CD8-positive, alpha-beta T cell (primary cell): ENCODE measurements at regions of chr2 and their contacts with region 1.

Region 1: GRCh38 chr2:120174963-120175581 is 48.1 kb downstream of the TMEM185B start:
- DNase-seq: peak in 3 of 9 experiments; percentile 26 to 78 (median 70)
- ATAC-seq: no peak
- H3K4me3 ChIP-seq: no peak overlapping the region
- H3K4me3 Mint-ChIP-seq: no peak overlapping the region
- H3K27ac ChIP-seq: peak overlapping the region in 1 of 2 experiments; percentile 1
- H3K27ac Mint-ChIP-seq: peak overlapping the region; percentile 80
- H3K4me1 ChIP-seq: peaks cover 46% of the 10 kb centered on the region
- H3K4me1 Mint-ChIP-seq: peaks cover 49% of the 10 kb centered on the region
- H3K27me3 ChIP-seq: no peaks in the 10 kb centered on the region
- H3K27me3 Mint-ChIP-seq: no peaks in the 10 kb centered on the region
- CTCF ChIP-seq: peak; percentile 94

Region 2: DNA sequence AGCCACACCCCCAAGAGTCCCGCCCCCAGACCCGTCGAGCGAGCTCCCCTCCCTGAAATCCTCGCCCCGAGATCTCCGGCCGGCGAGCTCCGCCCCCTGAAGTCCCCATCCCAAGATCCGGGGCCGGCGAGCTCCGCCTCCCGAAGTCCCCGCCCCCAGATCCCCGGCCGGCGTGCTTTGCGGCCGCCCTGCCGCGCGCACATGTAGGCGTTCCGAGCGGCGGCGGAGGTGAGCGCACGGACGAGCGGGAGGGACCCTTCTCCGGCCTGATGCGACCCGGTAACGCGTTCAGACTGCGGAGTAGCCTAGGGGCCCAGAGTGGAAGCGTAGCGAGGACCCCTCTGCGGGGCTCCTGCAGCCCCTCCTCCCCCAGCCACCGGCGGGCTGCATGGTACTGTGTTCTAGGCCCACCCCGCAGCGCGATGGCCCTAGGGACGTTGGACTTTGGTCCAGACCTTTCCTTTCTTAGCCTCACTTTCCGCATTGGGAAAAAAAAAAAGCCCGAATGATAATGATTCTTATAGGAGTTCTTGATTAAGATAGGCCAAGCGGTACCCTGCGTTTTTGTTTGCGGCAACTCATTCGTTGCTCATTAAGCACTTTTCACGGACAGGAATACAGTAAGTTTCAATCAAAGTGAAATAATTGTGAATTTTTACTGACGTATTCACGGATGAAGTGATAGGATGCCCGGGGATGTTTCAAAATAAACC is 495.9 kb before region 1 on chr2 and contains the start of gene TMEM177:
- CTCF ChIA-PET with region 1: interaction called, 7 read pairs
- POLR2A ChIA-PET with region 1: interaction called, 8 read pairs
- intact Hi-C with region 1: loop called in 1 of 2 experiments (anchors 2 kb)
- DNase-seq: peak; percentile 77 to 93 (median 87)
- ATAC-seq: peak; percentile 86
- H3K4me3 ChIP-seq: peak within 1 kb of the TSS; percentile 71 to 90
- H3K4me3 Mint-ChIP-seq: peak within 1 kb of the TSS; percentile 89
- H3K27ac ChIP-seq: peak within 1 kb of the TSS; percentile 59 to 69
- H3K27ac Mint-ChIP-seq: peak within 1 kb of the TSS; percentile 92
- H3K4me1 ChIP-seq: peaks cover 18% of the 10 kb centered on the region
- H3K4me1 Mint-ChIP-seq: peaks cover 27% of the 10 kb centered on the region
- H3K27me3 ChIP-seq: no peaks in the 10 kb centered on the region
- H3K27me3 Mint-ChIP-seq: no peaks in the 10 kb centered on the region
- CTCF ChIP-seq: no peak
- total RNA-seq, gene TMEM177: 2.1 to 3.8 TPM

Region 3: DNA sequence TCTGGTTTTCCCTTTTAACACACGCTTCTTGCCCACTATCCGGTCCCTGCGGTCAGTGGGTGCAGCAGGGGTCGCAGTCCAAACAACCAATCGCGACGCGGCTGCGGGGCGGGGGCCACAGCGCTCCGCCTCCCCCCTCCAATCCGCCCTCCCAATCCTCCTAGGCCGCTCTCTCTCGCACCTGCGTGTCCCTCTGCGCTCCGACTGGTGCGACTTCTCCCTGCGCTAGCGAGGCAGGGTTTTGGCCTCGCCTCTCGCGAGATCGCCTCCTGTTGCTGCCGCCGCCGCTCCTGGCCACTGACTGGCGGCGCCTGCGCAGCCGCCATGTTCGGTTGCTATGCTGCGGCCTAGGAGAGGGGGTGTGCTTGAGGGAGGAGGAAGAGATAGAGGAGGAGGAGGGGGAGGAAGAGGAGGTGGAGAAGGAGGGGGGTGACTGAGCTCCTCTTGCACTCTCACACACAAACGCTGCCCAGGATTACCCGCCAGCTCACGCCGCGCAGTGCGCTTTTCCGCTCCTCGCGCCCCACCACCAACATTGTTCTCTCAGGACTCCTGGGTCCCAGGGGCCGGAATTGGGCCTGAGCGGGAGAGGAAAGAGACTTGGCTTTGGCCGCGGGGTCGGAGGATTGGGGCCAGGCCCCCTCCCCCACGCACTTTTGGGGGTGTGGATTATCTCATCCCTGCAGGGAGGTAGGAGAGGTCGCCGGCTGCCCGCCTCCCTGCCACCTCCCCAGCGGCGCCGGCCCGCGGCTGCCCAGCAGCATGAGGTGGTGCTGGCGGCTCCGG is 415.4 kb before region 1 on chr2 and contains the start of gene PTPN4:
- CTCF ChIA-PET with region 1: interaction called, 63 read pairs
- POLR2A ChIA-PET with region 1: interaction called, 6 read pairs
- intact Hi-C with region 1: loop called (anchors 1 kb)
- DNase-seq: peak; percentile 91 to 99 (median 95)
- ATAC-seq: peak; percentile 90
- H3K4me3 ChIP-seq: peak within 1 kb of the TSS; percentile 83
- H3K4me3 Mint-ChIP-seq: peak within 1 kb of the TSS; percentile 95
- H3K27ac ChIP-seq: peak within 1 kb of the TSS; percentile 77 to 79
- H3K27ac Mint-ChIP-seq: peak within 1 kb of the TSS; percentile 96
- H3K4me1 ChIP-seq: peaks cover 31% of the 10 kb centered on the region
- H3K4me1 Mint-ChIP-seq: peaks cover 42% of the 10 kb centered on the region
- H3K27me3 ChIP-seq: no peaks in the 10 kb centered on the region
- H3K27me3 Mint-ChIP-seq: no peaks in the 10 kb centered on the region
- CTCF ChIP-seq: no peak
- total RNA-seq, gene PTPN4: 104 to 105 TPM

Region 4: GRCh38 chr2:120012771-120013596 is 162.1 kb before region 1 on chr2 and contains the start of gene EPB41L5:
- CTCF ChIA-PET with region 1: interaction called, 6 read pairs
- POLR2A ChIA-PET with region 1: interaction called, 3 read pairs
- intact Hi-C with region 1: loop called (anchors 1 to 2 kb)
- DNase-seq: peak; percentile 50 to 88 (median 80)
- ATAC-seq: peak; percentile 92
- H3K4me3 ChIP-seq: peak within 1 kb of the TSS; percentile 68 to 82
- H3K4me3 Mint-ChIP-seq: peak within 1 kb of the TSS; percentile 85
- H3K27ac ChIP-seq: peak within 1 kb of the TSS; percentile 32 to 44
- H3K27ac Mint-ChIP-seq: peak within 1 kb of the TSS; percentile 62
- H3K4me1 ChIP-seq: peaks cover 18% of the 10 kb centered on the region
- H3K4me1 Mint-ChIP-seq: peaks cover 26% of the 10 kb centered on the region
- H3K27me3 ChIP-seq: no peaks in the 10 kb centered on the region
- H3K27me3 Mint-ChIP-seq: no peaks in the 10 kb centered on the region
- CTCF ChIP-seq: no peak
- total RNA-seq, gene EPB41L5: 5.1 to 5.8 TPM

Region 5: DNA sequence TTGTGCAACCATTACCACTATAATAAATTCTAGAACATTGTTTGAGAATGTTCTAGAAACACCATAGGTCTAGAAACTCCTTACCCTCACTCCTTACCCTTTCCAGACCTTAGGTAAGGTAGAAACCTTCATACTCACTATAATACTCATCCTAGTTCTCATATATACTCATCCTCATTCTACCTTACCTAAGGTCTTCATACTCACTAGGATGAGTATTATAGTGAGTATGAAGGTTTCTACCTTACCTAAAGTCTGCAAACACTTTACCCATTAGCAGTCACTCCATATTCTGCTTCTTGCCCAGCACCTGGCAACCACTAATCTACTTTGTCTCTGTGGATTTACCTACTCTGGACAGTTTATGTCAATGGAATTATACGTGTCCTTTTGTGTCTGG is 26.8 kb before region 1 on chr2:
- CTCF ChIA-PET with region 1: no interaction called
- POLR2A ChIA-PET with region 1: no interaction called
- intact Hi-C with region 1: no loop called
- DNase-seq: no peak
- ATAC-seq: no peak
- H3K4me3 ChIP-seq: no peak overlapping the region
- H3K4me3 Mint-ChIP-seq: no peak overlapping the region
- H3K27ac ChIP-seq: no peak overlapping the region
- H3K27ac Mint-ChIP-seq: no peak overlapping the region
- H3K4me1 ChIP-seq: no peaks in the 10 kb centered on the region
- H3K4me1 Mint-ChIP-seq: no peaks in the 10 kb centered on the region
- H3K27me3 ChIP-seq: no peaks in the 10 kb centered on the region
- H3K27me3 Mint-ChIP-seq: no peaks in the 10 kb centered on the region
- CTCF ChIP-seq: no peak

Region 6: GRCh38 chr2:120206022-120206581 is 31.0 kb after region 1 on chr2:
- CTCF ChIA-PET with region 1: interaction called, 12 read pairs
- POLR2A ChIA-PET with region 1: no interaction called
- intact Hi-C with region 1: no loop called
- DNase-seq: peak in 4 of 9 experiments; percentile 30 to 46 (median 42)
- ATAC-seq: no peak
- H3K4me3 ChIP-seq: no peak overlapping the region
- H3K4me3 Mint-ChIP-seq: no peak overlapping the region
- H3K27ac ChIP-seq: no peak overlapping the region
- H3K27ac Mint-ChIP-seq: no peak overlapping the region
- H3K4me1 ChIP-seq: peaks cover 10% of the 10 kb centered on the region
- H3K4me1 Mint-ChIP-seq: peaks cover 9% of the 10 kb centered on the region
- H3K27me3 ChIP-seq: no peaks in the 10 kb centered on the region
- H3K27me3 Mint-ChIP-seq: no peaks in the 10 kb centered on the region
- CTCF ChIP-seq: no peak

Region 7: DNA sequence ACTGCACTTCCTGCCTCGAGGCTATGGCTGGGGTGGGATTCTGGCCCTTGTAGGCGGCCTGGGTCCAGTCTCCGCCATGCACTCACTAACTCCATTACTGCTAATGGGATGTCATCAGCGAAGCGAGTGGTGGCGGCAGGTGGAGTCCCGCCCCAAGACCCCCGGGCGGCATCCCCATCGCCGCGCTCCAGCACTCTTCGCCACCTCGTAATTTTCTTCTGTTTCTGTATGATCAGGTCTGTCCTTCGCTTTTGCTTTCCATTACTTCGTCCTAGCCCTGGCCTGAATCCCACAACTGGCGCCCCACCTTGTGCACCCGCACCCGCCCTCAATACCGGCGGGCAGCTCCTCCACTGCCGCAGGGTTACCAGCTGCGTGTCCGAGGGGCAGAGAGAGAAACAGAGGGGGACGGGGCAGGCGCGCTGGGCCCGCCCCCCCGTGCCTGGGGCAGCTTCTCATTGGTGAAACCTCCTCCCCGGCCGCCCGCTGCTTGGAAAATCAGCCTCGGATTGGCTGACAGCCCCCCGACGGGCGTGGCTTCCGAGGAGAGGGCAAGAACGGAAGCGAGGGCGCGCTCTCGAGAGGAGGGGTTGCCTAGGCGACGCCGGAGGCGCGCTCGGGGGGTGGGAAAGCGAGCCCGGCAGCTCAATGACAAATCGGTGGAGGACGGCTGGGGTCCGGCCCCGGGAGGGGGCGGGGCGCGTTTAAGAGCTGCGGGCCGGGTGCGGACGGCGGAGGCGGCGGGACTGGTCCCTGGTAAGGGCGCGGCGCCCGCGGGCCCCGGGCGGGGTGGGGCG is 77.4 kb after region 1 on chr2 and contains the start of gene RALB:
- CTCF ChIA-PET with region 1: interaction called, 8 read pairs
- POLR2A ChIA-PET with region 1: interaction called, 10 read pairs
- intact Hi-C with region 1: loop called (anchors 1 to 2 kb)
- DNase-seq: peak; percentile 96 to 99 (median 98)
- ATAC-seq: peak; percentile 95
- H3K4me3 ChIP-seq: peak within 1 kb of the TSS; percentile 87 to 100
- H3K4me3 Mint-ChIP-seq: peak within 1 kb of the TSS; percentile 99
- H3K27ac ChIP-seq: peak within 1 kb of the TSS; percentile 63 to 85
- H3K27ac Mint-ChIP-seq: peak within 1 kb of the TSS; percentile 94
- H3K4me1 ChIP-seq: peaks cover 18% of the 10 kb centered on the region
- H3K4me1 Mint-ChIP-seq: peaks cover 34% of the 10 kb centered on the region
- H3K27me3 ChIP-seq: no peaks in the 10 kb centered on the region
- H3K27me3 Mint-ChIP-seq: peaks cover 5% of the 10 kb centered on the region
- CTCF ChIP-seq: no peak
- total RNA-seq, gene RALB: 3.1 to 3.2 TPM